AG04449 (cell line): ENCODE measurements at regions of chr11 and their contacts with region 1.

Region 1: DNA sequence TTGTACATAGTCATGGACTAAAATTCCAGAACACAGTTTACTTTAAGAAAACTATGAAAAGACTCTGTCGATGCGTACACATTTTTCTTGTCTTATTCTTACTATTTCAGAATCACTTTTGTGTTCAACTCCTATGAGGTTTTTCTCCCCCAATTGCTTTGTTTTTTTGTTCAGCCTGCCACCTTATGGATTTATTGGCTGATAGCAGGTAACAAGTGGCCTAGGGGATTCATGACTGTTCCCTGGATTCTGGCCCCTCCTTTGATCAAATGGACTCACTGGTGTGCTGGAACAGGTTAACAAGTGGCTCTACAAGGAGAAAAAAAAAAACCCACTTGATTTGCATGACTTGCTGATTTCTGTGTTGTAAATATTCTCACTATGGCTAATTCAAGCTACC is 10.6 kb downstream of the MMP20 start:
- DNase-seq: no peak
- H3K4me3 ChIP-seq: no peak overlapping the region
- CTCF ChIP-seq: no peak

Region 2: DNA sequence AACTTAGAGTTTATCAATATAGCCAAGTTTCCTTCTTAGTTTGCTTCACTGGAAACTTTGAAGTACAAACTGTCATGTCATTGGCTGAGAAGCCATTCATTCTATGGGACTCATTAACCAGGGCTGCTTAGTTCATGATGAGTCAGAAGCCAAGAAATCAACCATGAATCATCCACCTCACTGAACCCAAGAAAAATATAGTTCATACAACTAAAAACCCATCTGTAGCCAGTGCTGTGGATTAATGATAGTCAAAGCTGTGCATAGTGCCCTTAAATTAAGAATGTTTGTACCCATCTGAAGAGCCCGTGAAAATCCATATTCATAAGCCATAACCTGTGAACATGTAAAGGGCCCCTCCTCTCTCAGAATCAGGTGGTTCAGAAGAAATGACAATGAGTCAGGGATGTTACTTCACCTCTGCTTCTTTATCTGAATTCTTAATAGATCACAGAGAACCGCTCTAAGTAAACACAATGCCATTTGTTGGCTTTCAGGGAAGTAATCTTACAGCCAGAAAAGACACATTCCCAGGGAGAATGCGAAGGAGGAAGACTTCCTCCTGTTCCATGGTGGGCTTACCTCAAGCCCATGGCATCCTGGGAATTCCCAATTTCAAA is 14.7 kb before region 1 on chr11:
- CTCF ChIA-PET with region 1: interaction called, 44 read pairs
- POLR2A ChIA-PET with region 1: no interaction called
- DNase-seq: peak; percentile 70
- H3K4me3 ChIP-seq: no peak overlapping the region
- CTCF ChIP-seq: no peak

Region 3: GRCh38 chr11:102637731-102638130 is 23.2 kb after region 1 on chr11:
- CTCF ChIA-PET with region 1: no interaction called
- POLR2A ChIA-PET with region 1: no interaction called
- DNase-seq: no peak
- H3K4me3 ChIP-seq: no peak overlapping the region
- CTCF ChIP-seq: no peak